ENCODE measurements at regions of chr2 and their contacts with region 1.

Region 1: DNA sequence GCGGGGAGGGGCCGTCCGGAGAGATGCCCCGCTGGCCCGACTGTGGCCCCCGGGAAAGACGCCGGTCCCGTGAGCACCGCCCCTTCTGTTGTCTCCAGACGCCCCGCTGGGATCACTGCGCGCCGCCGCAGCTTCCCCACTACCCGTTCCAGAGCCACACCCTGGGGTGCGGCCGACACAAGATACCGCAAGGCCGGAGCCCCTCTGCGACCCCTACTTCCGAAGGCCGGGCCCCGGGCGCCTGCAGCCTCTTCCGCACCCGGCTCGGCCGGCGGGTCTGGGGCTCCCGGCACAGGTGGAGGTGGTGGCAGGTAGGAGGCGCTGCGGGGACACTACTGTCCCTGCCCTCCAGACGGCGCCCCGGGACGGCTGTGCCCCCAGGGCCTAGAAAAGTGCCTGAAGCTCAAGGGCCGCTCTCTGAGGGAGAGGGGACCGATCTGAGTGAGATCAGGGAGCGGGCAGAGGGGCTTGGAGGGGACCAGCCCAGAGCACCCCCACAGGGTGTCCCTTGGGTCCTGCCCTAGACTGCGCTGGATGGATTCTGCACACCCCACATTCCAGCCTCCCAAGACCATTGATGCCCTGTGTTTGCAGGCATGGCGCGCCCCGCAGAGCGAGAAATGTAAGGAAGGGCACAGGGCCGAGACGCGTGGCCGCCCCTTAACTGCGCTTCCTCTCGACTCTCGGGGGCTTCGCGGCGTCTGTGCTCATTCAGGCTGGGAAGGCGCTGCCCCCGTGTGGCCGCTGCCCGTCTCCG is 80.0 kb downstream of the GFPT1 start:
- DNase-seq: peak; percentile 51 to 87 (median 70)
- ATAC-seq: peak; percentile 66 to 89 (median 83)
- H3K4me3 ChIP-seq: peak overlapping the region; percentile 32 to 52 (median 33)
- H3K27ac ChIP-seq: no peak overlapping the region
- H3K4me1 ChIP-seq: peaks cover 8 to 21% (median 19%) of the 10 kb centered on the region in 3 donors
- H3K27me3 ChIP-seq: no peaks in the 10 kb centered on the region
- CTCF ChIP-seq: peak; percentile 26 to 58 (median 44)

Region 2: DNA sequence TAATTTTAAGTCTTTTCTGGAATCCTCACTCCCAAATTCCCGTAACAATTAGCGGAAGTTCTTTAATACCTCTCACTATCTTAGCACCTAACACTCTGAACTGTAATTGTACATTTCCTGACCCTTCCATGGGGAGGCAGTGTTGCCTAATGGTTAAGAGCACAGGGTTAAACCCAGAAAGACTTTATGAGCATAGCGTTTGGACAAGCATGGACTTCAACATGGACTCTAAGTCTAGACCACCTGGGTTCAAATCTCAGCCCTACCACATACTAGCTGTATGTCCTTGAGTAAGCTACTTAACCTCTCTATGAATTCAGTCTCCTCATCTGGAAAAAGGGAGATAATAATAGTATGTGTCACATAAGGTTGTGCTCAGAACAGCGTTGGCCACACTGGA is 281.0 kb before region 1 on chr2:
- intact Hi-C with region 1: loop called (anchors 5 to 10 kb)
- DNase-seq: peak in 3 of 6 donors; percentile 38 to 65 (median 42)
- ATAC-seq: peak; percentile 77 to 99 (median 94)
- H3K4me3 ChIP-seq: no peak overlapping the region
- H3K27ac ChIP-seq: no peak overlapping the region
- H3K4me1 ChIP-seq: no peaks in the 10 kb centered on the region
- H3K27me3 ChIP-seq: no peaks in the 10 kb centered on the region
- CTCF ChIP-seq: peak; percentile 22 to 52 (median 30)

Region 3: GRCh38 chr2:69046221-69046662 is 260.8 kb before region 1 on chr2:
- intact Hi-C with region 1: no loop called
- DNase-seq: peak in 4 of 6 donors; percentile 35 to 78 (median 60)
- ATAC-seq: peak; percentile 92 to 95 (median 94)
- H3K4me3 ChIP-seq: no peak overlapping the region
- H3K27ac ChIP-seq: peak overlapping the region in 2 of 4 donors; percentile 17 to 59
- H3K4me1 ChIP-seq: peaks cover 0 to 15% (median 6%) of the 10 kb centered on the region in 3 donors
- H3K27me3 ChIP-seq: no peaks in the 10 kb centered on the region
- CTCF ChIP-seq: no peak

Region 4: GRCh38 chr2:69704446-69704845 is 397.4 kb after region 1 on chr2:
- intact Hi-C with region 1: no loop called
- DNase-seq: no peak
- ATAC-seq: peak in 1 of 4 donors; percentile 52
- H3K4me3 ChIP-seq: no peak overlapping the region
- H3K27ac ChIP-seq: no peak overlapping the region
- H3K4me1 ChIP-seq: no peaks in the 10 kb centered on the region
- H3K27me3 ChIP-seq: no peaks in the 10 kb centered on the region
- CTCF ChIP-seq: no peak